SK-N-SH (cell line): ENCODE measurements at regions of chr17 and their contacts with region 1.

Region 1: DNA sequence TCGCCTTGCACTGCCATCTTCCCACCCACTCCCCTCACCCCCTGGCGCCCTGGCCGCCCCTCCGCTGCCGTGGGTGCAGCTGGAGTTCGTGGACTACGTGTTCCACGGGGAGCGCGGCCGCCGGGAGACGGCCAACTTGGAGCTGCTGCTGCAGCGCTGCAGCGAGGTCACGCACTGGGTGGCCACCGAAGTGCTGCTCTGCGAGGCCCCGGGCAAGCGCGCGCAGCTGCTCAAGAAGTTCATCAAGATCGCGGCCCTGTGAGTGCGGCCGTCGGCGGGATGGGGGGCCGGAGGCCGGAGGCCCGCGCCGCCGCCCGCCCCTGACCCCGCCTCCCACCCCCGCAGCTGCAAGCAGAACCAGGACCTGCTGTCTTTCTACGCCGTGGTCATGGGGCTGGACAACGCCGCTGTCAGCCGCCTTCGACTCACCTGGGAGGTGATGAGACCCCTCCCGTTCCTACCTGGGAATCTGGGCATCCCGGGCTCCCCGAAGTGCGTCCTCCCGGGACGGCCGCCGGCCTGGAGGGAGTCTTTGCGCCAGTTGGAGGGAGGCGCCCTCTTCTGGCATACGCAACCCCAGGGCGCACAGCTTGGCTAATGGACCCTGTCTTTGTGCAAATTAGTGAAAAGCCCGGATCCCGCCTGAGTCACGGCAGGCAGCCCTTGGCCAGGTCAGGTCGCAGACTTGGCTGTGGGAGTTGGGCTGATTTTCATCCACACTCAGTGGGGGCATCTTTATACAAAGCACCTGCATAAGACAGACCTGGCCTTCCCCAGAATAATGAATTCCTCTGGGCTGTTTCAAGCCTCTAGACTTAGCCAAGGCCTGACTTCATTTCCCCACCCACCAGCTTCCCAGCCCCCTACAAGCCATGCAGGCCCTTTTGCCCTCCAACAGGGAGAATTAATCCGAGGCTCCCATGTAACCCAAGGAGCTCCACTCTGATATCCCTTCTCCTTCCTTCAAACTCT is 14.3 kb downstream of the RAPGEFL1 start:
- DNase-seq: peak; percentile 87
- H3K4me3 ChIP-seq: peak overlapping the region; percentile 48 to 55
- H3K27ac ChIP-seq: peak overlapping the region in 1 of 2 experiments; percentile 55; a peak in 1 of 4 replicates
- H3K4me1 ChIP-seq: peaks cover 4 to 26% of the 10 kb centered on the region in 2 experiments; a peak in 3 of 4 replicates
- H3K27me3 ChIP-seq: no peaks in the 10 kb centered on the region
- CTCF ChIP-seq: peak; percentile 78
- EP300 ChIP-seq: no peak
- RAD21 ChIP-seq: peak; percentile 62

Region 2: DNA sequence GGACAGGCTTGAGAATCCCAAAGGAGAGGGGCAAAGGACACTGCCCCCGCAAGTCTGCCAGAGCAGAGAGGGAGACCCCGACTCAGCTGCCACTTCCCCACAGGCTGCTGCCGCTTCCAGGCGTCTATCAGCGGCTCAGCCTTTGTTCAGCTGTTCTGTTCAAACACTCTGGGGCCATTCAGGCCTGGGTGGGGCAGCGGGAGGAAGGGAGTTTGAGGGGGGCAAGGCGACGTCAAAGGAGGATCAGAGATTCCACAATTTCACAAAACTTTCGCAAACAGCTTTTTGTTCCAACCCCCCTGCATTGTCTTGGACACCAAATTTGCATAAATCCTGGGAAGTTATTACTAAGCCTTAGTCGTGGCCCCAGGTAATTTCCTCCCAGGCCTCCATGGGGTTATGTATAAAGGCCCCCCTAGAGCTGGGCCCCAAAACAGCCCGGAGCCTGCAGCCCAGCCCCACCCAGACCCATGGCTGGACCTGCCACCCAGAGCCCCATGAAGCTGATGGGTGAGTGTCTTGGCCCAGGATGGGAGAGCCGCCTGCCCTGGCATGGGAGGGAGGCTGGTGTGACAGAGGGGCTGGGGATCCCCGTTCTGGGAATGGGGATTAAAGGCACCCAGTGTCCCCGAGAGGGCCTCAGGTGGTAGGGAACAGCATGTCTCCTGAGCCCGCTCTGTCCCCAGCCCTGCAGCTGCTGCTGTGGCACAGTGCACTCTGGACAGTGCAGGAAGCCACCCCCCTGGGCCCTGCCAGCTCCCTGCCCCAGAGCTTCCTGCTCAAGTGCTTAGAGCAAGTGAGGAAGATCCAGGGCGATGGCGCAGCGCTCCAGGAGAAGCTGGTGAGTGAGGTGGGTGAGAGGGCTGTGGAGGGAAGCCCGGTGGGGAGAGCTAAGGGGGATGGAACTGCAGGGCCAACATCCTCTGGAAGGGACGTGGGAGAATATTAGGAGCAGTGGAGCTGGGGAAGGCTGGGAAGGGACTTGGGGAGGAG is 176.2 kb before region 1 on chr17 and contains the start of gene CSF3:
- CTCF ChIA-PET with region 1: interaction called, 25 read pairs
- POLR2A ChIA-PET with region 1: no interaction called
- DNase-seq: peak; percentile 19
- H3K4me3 ChIP-seq: no peak within 1 kb of the TSS
- H3K27ac ChIP-seq: no peak within 1 kb of the TSS
- H3K4me1 ChIP-seq: no peaks in the 10 kb centered on the region; a peak in 1 of 4 replicates
- H3K27me3 ChIP-seq: no peaks in the 10 kb centered on the region
- CTCF ChIP-seq: no peak
- EP300 ChIP-seq: no peak
- RAD21 ChIP-seq: no peak
- polyA plus RNA-seq, gene CSF3: not detected in 2 replicates

Region 3: DNA sequence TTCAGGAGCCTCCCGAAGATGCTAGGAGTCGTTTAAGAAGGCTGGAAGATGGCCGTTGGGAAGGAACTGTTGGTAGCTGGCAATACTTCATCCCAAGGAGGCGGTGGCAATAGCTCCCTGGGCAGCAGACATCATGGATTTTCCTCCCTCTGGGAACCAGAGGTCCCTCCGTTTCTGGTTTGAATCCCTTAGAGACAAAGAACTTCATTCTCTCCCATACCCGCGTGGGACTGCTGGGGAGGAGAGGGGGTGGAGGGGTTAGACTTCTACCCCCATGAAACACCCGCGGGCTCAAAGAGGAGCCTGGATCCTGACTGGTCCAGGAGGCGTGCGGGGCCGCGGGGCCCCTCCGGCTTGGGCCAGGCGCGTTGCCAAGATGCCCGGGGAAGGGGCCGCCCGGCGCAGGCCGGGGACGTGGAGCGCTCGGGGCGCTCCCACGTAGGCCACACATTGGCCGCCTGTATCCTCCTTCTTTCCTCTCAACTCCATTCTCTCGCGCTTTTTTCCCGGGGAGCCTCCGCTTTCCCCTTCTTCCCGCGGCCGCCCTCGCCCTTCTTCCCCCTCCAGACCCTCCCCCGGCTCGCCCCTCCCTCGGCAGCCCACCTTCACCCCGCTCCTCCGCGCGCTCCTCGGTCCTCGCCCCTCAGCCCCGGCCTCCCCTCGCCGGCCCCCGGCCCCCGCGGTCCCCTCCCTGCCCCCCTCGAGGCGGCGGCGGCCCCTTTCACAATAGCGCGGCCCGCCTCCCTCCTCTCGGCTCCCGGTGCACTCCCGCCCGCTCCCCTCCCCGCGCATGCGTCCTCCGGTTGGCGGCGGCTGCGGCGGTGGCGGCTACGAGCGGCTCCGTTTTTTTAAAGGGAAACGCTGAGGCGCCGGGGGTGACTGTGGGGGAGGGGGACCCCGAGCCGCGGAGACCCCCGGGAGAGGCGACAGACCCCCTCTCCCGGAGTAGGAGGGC is 70.1 kb before region 1 on chr17 and contains the start of gene MSL1:
- CTCF ChIA-PET with region 1: interaction called, 13 read pairs
- POLR2A ChIA-PET with region 1: no interaction called
- DNase-seq: peak; percentile 98
- H3K4me3 ChIP-seq: peak within 1 kb of the TSS; percentile 81 to 99
- H3K27ac ChIP-seq: peak within 1 kb of the TSS; percentile 89 to 92
- H3K4me1 ChIP-seq: peaks cover 6 to 7% of the 10 kb centered on the region in 2 experiments; a peak in 2 of 4 replicates
- H3K27me3 ChIP-seq: no peaks in the 10 kb centered on the region
- CTCF ChIP-seq: no peak
- EP300 ChIP-seq: no peak
- RAD21 ChIP-seq: no peak
- polyA plus RNA-seq, gene MSL1: 30.2 and 39.8 TPM in 2 replicates

Region 4: DNA sequence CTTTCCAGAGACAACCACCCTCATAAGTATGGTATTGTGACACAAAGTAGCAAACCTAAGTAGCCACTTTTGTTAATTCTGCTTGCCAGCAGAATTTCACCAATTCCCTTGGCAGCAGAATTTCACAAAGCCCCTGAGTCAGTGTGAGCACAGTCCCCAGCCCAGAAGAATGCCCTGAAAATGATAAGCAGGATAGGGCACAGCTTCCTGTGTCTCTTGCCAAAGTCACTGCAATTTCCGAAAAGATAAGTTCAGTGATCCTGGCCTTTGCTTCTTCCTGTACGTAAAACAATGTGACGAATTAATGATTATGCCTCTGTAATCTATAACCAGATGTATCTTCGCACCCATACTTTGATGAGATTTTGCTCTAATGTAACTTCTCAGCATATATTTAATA is 11.6 kb after region 1 on chr17:
- CTCF ChIA-PET with region 1: interaction called, 49 read pairs
- POLR2A ChIA-PET with region 1: no interaction called
- DNase-seq: no peak
- H3K4me3 ChIP-seq: no peak overlapping the region
- H3K27ac ChIP-seq: no peak overlapping the region
- H3K4me1 ChIP-seq: no peaks in the 10 kb centered on the region
- H3K27me3 ChIP-seq: no peaks in the 10 kb centered on the region
- CTCF ChIP-seq: no peak
- EP300 ChIP-seq: no peak
- RAD21 ChIP-seq: no peak

Region 5: DNA sequence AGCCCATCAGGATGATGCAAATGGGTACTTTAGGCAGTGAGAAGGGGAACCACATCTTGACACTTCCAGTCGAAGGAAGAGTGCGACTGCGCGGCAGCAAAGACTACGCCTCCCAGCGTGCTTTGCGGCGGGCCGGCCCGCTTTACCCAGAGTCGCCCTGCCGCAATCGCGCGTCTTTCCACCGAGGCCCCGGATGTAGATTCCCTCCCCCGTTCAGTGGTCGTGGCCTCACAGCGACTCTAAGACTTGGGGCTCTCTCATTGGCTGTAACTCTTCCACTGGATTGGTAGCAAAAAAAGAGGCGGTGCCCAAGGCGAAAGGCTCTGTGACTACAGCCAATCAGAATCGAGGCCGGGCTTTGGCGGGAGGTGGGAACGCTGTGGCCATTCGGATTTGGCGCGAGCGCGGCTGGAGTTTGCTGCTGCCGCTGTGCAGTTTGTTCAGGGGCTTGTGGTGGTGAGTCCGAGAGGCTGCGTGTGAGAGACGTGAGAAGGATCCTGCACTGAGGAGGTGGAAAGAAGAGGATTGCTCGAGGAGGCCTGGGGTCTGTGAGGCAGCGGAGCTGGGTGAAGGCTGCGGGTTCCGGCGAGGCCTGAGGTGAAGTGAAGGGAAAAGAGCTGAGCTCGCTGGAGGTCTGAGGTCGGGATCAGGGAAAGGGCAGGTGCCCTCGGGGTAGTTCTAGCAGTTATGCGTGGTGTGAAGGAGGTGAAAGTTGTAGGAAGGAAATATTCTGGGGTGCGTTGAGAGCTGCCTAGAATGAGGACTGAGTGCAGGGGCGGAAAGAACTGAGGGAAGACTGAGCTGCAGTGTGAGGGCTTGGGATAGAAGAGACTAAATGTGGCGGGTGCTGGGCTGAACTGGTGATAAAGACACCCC is 96.2 kb after region 1 on chr17 and contains the start of gene CDC6:
- CTCF ChIA-PET with region 1: interaction called, 194 read pairs
- POLR2A ChIA-PET with region 1: interaction called, 3 read pairs
- DNase-seq: peak; percentile 93
- H3K4me3 ChIP-seq: peak within 1 kb of the TSS; percentile 66 to 72
- H3K27ac ChIP-seq: peak within 1 kb of the TSS; percentile 56 to 75
- H3K4me1 ChIP-seq: peaks cover 7 to 11% of the 10 kb centered on the region in 2 experiments; a peak in 3 of 4 replicates
- H3K27me3 ChIP-seq: no peaks in the 10 kb centered on the region
- CTCF ChIP-seq: no peak
- EP300 ChIP-seq: no peak
- RAD21 ChIP-seq: no peak
- polyA plus RNA-seq, gene CDC6: 12.7 and 12.8 TPM in 2 replicates